ENCODE measurements at regions of chr7 and their contacts with region 1.

Region 1: GRCh38 chr7:50156706-50157105 is 63.7 kb upstream of the ZPBP start:
- DNase-seq: no peak
- ATAC-seq: no peak
- H3K4me3 ChIP-seq: no peak overlapping the region
- H3K4me3 Mint-ChIP-seq: peak overlapping the region; percentile 33
- H3K27ac ChIP-seq: no peak overlapping the region
- H3K27ac Mint-ChIP-seq: peak overlapping the region; percentile 42
- H3K4me1 ChIP-seq: peaks cover 16% of the 10 kb centered on the region
- H3K4me1 Mint-ChIP-seq: peaks cover 18% of the 10 kb centered on the region
- H3K27me3 ChIP-seq: no peaks in the 10 kb centered on the region
- H3K27me3 Mint-ChIP-seq: no peaks in the 10 kb centered on the region
- CTCF ChIP-seq: no peak

Region 2: GRCh38 chr7:50142425-50143017 is 14.2 kb before region 1 on chr7:
- CTCF ChIA-PET with region 1: interaction called, 14 read pairs
- POLR2A ChIA-PET with region 1: no interaction called
- intact Hi-C with region 1: no loop called
- DNase-seq: peak in 4 of 9 experiments; percentile 38 to 78 (median 59)
- ATAC-seq: peak; percentile 85
- H3K4me3 ChIP-seq: no peak overlapping the region
- H3K4me3 Mint-ChIP-seq: peak overlapping the region; percentile 57
- H3K27ac ChIP-seq: no peak overlapping the region
- H3K27ac Mint-ChIP-seq: peak overlapping the region; percentile 84
- H3K4me1 ChIP-seq: peaks cover 5% of the 10 kb centered on the region
- H3K4me1 Mint-ChIP-seq: peaks cover 15% of the 10 kb centered on the region
- H3K27me3 ChIP-seq: no peaks in the 10 kb centered on the region
- H3K27me3 Mint-ChIP-seq: no peaks in the 10 kb centered on the region
- CTCF ChIP-seq: peak; percentile 91

Measured in CD8-positive, alpha-beta T cell (primary cell).